Posterior cingulate gyrus (tissue), 11 donors: ENCODE measurements at regions of chr9 and their contacts with region 1.

Region 1: GRCh38 chr9:129139993-129140396 is 28.8 kb downstream of the PTPA start:
- DNase-seq: peak; percentile 66 to 96 (median 79)

Region 2: GRCh38 chr9:129058965-129059795 is 80.8 kb before region 1 on chr9:
- intact Hi-C with region 1: no loop called
- DNase-seq: peak in 1 of 10 donors; percentile 83

Region 3: GRCh38 chr9:129610473-129611301 is 470.7 kb after region 1 on chr9:
- intact Hi-C with region 1: loop called (anchors 1 kb)
- DNase-seq: peak; percentile 54 to 96 (median 78)